Activated CD4-positive, alpha-beta T cell treated with anti-CD3 and anti-CD28 coated beads for 36 hours (primary cell): ENCODE measurements at regions of chr4 and their contacts with region 1.

Region 1: GRCh38 chr4:145034727-145035211 is 63.2 kb downstream of the ANAPC10 start:
- DNase-seq: no peak
- ATAC-seq: no peak
- H3K4me3 Mint-ChIP-seq: no peak overlapping the region
- H3K27ac Mint-ChIP-seq: no peak overlapping the region
- H3K4me1 Mint-ChIP-seq: no peaks in the 10 kb centered on the region
- H3K27me3 Mint-ChIP-seq: no peaks in the 10 kb centered on the region

Region 2: GRCh38 chr4:144712775-144713174 is 322.0 kb before region 1 on chr4:
- CTCF ChIA-PET with region 1: no interaction called
- POLR2A ChIA-PET with region 1: no interaction called
- intact Hi-C with region 1: no loop called
- DNase-seq: no peak
- ATAC-seq: no peak
- H3K4me3 Mint-ChIP-seq: no peak overlapping the region
- H3K27ac Mint-ChIP-seq: no peak overlapping the region
- H3K4me1 Mint-ChIP-seq: no peaks in the 10 kb centered on the region
- H3K27me3 Mint-ChIP-seq: no peaks in the 10 kb centered on the region

Region 3: DNA sequence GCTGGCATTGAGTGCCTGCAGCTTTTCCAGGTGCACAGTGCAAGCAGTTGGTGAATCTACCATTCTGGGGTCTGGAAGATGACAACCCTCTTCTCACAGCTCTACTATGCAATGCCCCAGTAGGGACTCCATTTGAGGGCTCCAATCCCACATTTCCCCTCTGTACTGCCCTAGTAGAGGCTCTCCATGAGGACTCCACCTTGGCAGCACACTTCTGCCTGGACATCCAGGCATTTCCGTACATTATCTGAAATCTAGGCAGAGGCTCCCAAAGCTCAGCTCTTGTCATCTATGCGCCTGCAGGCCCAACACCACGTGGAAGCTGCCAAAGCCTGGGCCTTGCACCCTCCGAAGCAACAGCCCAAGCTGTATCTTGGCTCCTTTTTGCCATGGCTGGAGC is 438.4 kb after region 1 on chr4:
- CTCF ChIA-PET with region 1: no interaction called
- POLR2A ChIA-PET with region 1: no interaction called
- intact Hi-C with region 1: loop called in 1 of 2 experiments (anchors 5 kb)
- DNase-seq: no peak
- ATAC-seq: no peak
- H3K4me3 Mint-ChIP-seq: no peak overlapping the region
- H3K27ac Mint-ChIP-seq: no peak overlapping the region
- H3K4me1 Mint-ChIP-seq: no peaks in the 10 kb centered on the region
- H3K27me3 Mint-ChIP-seq: peaks cover 3% of the 10 kb centered on the region